Naive thymus-derived CD8-positive, alpha-beta T cell (primary cell): ENCODE measurements at regions of chr5 and their contacts with region 1.

Region 1: GRCh38 chr5:80255732-80256479 is at the start of gene SERINC5:
- DNase-seq: peak; percentile 80 to 91 (median 85)
- ATAC-seq: peak; percentile 72 to 77
- H3K4me3 Mint-ChIP-seq: peak within 1 kb of the TSS; percentile 90 to 99 (median 98)
- H3K27ac Mint-ChIP-seq: peak within 1 kb of the TSS; percentile 95 to 100 (median 98)
- H3K4me1 Mint-ChIP-seq: peaks cover 33 to 54% (median 49%) of the 10 kb centered on the region in 4 donors
- H3K27me3 Mint-ChIP-seq: no peaks in the 10 kb centered on the region
- polyA plus RNA-seq, gene SERINC5: 21.8 to 30.6 (median 24.1) TPM

Region 2: GRCh38 chr5:80134879-80135278 is 121.0 kb before region 1 on chr5:
- POLR2A ChIA-PET with region 1: interaction called, 46 read pairs
- DNase-seq: no peak
- ATAC-seq: no peak
- H3K4me3 Mint-ChIP-seq: peak overlapping the region in 9 of 10 donors; percentile 38 to 83 (median 75)
- H3K27ac Mint-ChIP-seq: peak overlapping the region; percentile 85 to 98 (median 92)
- H3K4me1 Mint-ChIP-seq: peaks cover 54 to 92% (median 87%) of the 10 kb centered on the region in 4 donors
- H3K27me3 Mint-ChIP-seq: no peaks in the 10 kb centered on the region

Region 3: GRCh38 chr5:80153586-80154126 is 102.2 kb before region 1 on chr5:
- POLR2A ChIA-PET with region 1: interaction called, 15 read pairs
- DNase-seq: peak in 7 of 10 donors; percentile 23 to 77 (median 73)
- ATAC-seq: peak; percentile 65 to 71
- H3K4me3 Mint-ChIP-seq: peak overlapping the region in 9 of 10 donors; percentile 28 to 87 (median 79)
- H3K27ac Mint-ChIP-seq: peak overlapping the region; percentile 94 to 100 (median 98)
- H3K4me1 Mint-ChIP-seq: peaks cover 24 to 95% (median 71%) of the 10 kb centered on the region in 4 donors
- H3K27me3 Mint-ChIP-seq: no peaks in the 10 kb centered on the region

Region 4: GRCh38 chr5:80191991-80192398 is 63.9 kb before region 1 on chr5:
- POLR2A ChIA-PET with region 1: interaction called, 121 read pairs
- DNase-seq: peak; percentile 24 to 81 (median 56)
- ATAC-seq: peak; percentile 74 to 82
- H3K4me3 Mint-ChIP-seq: peak overlapping the region; percentile 78 to 90 (median 85)
- H3K27ac Mint-ChIP-seq: peak overlapping the region; percentile 79 to 99 (median 94)
- H3K4me1 Mint-ChIP-seq: peaks cover 57 to 96% (median 87%) of the 10 kb centered on the region in 4 donors
- H3K27me3 Mint-ChIP-seq: no peaks in the 10 kb centered on the region

Region 5: DNA sequence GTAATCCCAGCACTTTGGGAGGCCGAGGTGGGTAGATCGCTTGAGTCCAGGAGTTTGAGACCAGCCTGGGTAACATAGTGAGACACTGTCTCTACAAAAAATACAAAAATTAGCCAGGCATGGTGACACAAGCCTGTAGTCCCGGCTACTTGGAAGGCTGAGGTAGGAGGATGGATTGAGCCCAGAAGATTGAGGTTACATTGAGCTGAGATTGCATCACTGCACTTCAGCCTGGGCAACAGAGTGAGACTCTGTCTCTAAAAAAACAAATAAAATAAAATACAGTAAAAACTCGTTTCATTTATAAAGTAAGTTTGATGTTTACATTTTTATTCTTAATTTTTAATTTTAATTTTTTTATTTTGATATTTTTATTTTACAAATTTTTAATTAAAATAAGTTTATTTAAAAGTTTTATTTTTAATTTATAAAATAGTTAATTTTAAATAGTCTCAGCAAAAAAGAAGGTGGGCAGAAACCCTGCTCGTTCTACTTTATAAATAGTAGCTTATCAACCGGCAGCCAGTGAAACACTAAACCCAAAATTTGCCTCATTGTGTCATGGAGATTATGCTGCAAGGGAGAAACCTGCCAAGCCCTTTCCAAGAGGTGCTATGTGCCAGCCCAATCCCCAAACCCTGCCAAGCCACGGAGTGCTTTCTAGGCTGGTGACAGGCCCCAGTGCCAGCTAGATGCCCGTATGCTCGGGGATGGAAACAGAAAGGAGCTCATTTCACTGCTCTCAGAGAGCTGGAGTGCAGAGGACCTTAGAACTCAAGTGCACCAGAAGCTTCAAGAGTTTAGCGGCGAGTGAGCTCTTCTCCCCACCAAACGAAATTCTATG is 38.9 kb before region 1 on chr5:
- POLR2A ChIA-PET with region 1: interaction called, 86 read pairs
- DNase-seq: peak in 1 of 10 donors; percentile 19
- ATAC-seq: peak; percentile 26 to 35
- H3K4me3 Mint-ChIP-seq: peak overlapping the region; percentile 46 to 92 (median 82)
- H3K27ac Mint-ChIP-seq: peak overlapping the region; percentile 85 to 98 (median 94)
- H3K4me1 Mint-ChIP-seq: peaks cover 51 to 95% (median 93%) of the 10 kb centered on the region in 4 donors
- H3K27me3 Mint-ChIP-seq: no peaks in the 10 kb centered on the region

Region 6: GRCh38 chr5:80238778-80239679 is 16.9 kb before region 1 on chr5:
- POLR2A ChIA-PET with region 1: interaction called, 23 read pairs
- DNase-seq: peak in 1 of 10 donors; percentile 26
- ATAC-seq: peak; percentile 9 to 30
- H3K4me3 Mint-ChIP-seq: peak overlapping the region; percentile 23 to 85 (median 64)
- H3K27ac Mint-ChIP-seq: peak overlapping the region; percentile 68 to 94 (median 86)
- H3K4me1 Mint-ChIP-seq: peaks cover 39 to 82% (median 75%) of the 10 kb centered on the region in 4 donors
- H3K27me3 Mint-ChIP-seq: no peaks in the 10 kb centered on the region

Region 7: GRCh38 chr5:80346055-80346454 is 90.1 kb after region 1 on chr5:
- POLR2A ChIA-PET with region 1: no interaction called
- DNase-seq: peak in 8 of 10 donors; percentile 11 to 47 (median 29)
- ATAC-seq: peak; percentile 66 to 74
- H3K4me3 Mint-ChIP-seq: no peak overlapping the region
- H3K27ac Mint-ChIP-seq: peak overlapping the region in 2 of 10 donors; percentile 2 to 3
- H3K4me1 Mint-ChIP-seq: peaks cover 0 to 7% (median 4%) of the 10 kb centered on the region in 4 donors
- H3K27me3 Mint-ChIP-seq: peaks cover 5 to 11% (median 7%) of the 10 kb centered on the region in 5 donors